ENCODE measurements at regions of chr3 and their contacts with region 1.

Region 1: GRCh38 chr3:78659386-78659987 is 1108.3 kb downstream of the ROBO1 start:
- DNase-seq: no peak
- ATAC-seq: peak; percentile 41
- H3K4me3 ChIP-seq: no peak overlapping the region
- H3K27ac ChIP-seq: no peak overlapping the region
- H3K4me1 ChIP-seq: no peaks in the 10 kb centered on the region
- H3K27me3 ChIP-seq: no peaks in the 10 kb centered on the region
- CTCF ChIP-seq: peak; percentile 29 to 61 (median 30); a peak in 5 of 6 replicates
- EP300 ChIP-seq: no peak
- POLR2A ChIP-seq: no peak
- RAD21 ChIP-seq: peak; percentile 80

Region 2: GRCh38 chr3:78872195-78872594 is 212.7 kb after region 1 on chr3:
- CTCF ChIA-PET with region 1: no interaction called
- POLR2A ChIA-PET with region 1: interaction called, 6 read pairs
- RAD21 ChIA-PET with region 1: interaction called, 3 read pairs
- SMC1A ChIA-PET with region 1: interaction called, 3 read pairs
- in situ Hi-C with region 1: no loop called
- intact Hi-C with region 1: loop called (anchors 5 kb)
- DNase-seq: no peak
- ATAC-seq: peak; percentile 20; the same call in 2 of the 3 replicates
- H3K4me3 ChIP-seq: no peak overlapping the region
- H3K27ac ChIP-seq: 0 out of 2 replicates have a peak overlapping the region, but pooled peaks have one; percentile 4
- H3K4me1 ChIP-seq: no peaks in the 10 kb centered on the region
- H3K27me3 ChIP-seq: no peaks in the 10 kb centered on the region
- CTCF ChIP-seq: no peak
- EP300 ChIP-seq: no peak; a peak in 1 of 4 replicates
- POLR2A ChIP-seq: no peak
- RAD21 ChIP-seq: no peak

Region 3: DNA sequence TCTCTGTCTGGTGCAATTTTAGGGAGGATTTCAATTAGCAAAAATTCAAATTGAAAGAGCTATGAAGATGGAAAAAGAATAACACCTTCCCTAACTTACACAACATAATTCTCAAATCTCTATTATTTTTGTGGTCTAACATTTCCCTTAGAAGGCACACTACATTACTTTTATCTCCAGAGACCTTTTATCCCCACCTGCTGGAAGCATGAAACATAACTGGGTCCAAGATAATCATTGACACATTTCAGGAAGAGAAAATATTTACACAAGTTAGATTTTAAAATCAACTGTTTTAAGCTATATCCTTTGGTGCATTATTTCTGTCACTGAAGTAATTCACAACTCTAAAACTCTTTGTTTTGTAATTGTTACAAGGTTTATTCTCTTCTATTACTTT is 328.8 kb after region 1 on chr3:
- CTCF ChIA-PET with region 1: interaction called, 18 read pairs
- POLR2A ChIA-PET with region 1: no interaction called
- RAD21 ChIA-PET with region 1: interaction called, 8 read pairs
- SMC1A ChIA-PET with region 1: interaction called, 9 read pairs
- in situ Hi-C with region 1: no loop called
- intact Hi-C with region 1: loop called (anchors 5 kb)
- DNase-seq: no peak
- ATAC-seq: no peak
- H3K4me3 ChIP-seq: no peak overlapping the region
- H3K27ac ChIP-seq: no peak overlapping the region
- H3K4me1 ChIP-seq: no peaks in the 10 kb centered on the region
- H3K27me3 ChIP-seq: no peaks in the 10 kb centered on the region
- CTCF ChIP-seq: peak in 1 of 3 experiments; percentile 32; a peak in 1 of 6 replicates
- EP300 ChIP-seq: no peak
- POLR2A ChIP-seq: no peak
- RAD21 ChIP-seq: peak; percentile 23

Region 4: DNA sequence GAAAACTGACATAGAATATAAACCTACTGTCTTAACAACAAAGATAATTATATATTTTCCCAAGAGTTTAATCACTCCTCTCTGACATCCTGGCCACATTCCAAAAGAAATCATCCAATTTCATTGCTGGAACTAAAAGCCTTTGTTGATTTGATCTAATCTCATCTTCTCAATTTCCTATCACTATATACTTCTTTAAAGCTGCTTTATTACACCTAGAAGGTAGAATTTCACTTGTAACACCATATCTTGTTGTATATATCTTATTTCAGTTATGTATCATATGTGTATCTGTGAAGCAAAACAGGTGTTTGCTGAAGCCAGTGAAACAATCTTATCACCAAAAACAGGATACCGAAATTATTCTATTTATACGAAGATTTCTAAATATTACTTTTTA is 368.1 kb after region 1 on chr3:
- CTCF ChIA-PET with region 1: interaction called, 104 read pairs
- POLR2A ChIA-PET with region 1: interaction called, 3 read pairs
- RAD21 ChIA-PET with region 1: interaction called, 56 read pairs
- SMC1A ChIA-PET with region 1: interaction called, 55 read pairs
- in situ Hi-C with region 1: loop called (anchors 5 kb)
- intact Hi-C with region 1: loop called (anchors 1 kb)
- DNase-seq: no peak
- ATAC-seq: no peak
- H3K4me3 ChIP-seq: no peak overlapping the region
- H3K27ac ChIP-seq: no peak overlapping the region
- H3K4me1 ChIP-seq: no peaks in the 10 kb centered on the region
- H3K27me3 ChIP-seq: no peaks in the 10 kb centered on the region
- CTCF ChIP-seq: no peak
- EP300 ChIP-seq: no peak
- POLR2A ChIP-seq: no peak
- RAD21 ChIP-seq: no peak

Region 5: GRCh38 chr3:79032686-79033318 is 373.3 kb after region 1 on chr3:
- CTCF ChIA-PET with region 1: interaction called, 104 read pairs
- POLR2A ChIA-PET with region 1: interaction called, 3 read pairs
- RAD21 ChIA-PET with region 1: interaction called, 56 read pairs
- SMC1A ChIA-PET with region 1: interaction called, 55 read pairs
- in situ Hi-C with region 1: loop called (anchors 5 kb)
- intact Hi-C with region 1: loop called (anchors 1 kb)
- DNase-seq: no peak
- ATAC-seq: peak; percentile 78
- H3K4me3 ChIP-seq: no peak overlapping the region
- H3K27ac ChIP-seq: no peak overlapping the region
- H3K4me1 ChIP-seq: no peaks in the 10 kb centered on the region
- H3K27me3 ChIP-seq: no peaks in the 10 kb centered on the region
- CTCF ChIP-seq: peak; percentile 35 to 59 (median 35); a peak in 5 of 6 replicates
- EP300 ChIP-seq: no peak
- POLR2A ChIP-seq: no peak
- RAD21 ChIP-seq: peak; percentile 77

Region 6: DNA sequence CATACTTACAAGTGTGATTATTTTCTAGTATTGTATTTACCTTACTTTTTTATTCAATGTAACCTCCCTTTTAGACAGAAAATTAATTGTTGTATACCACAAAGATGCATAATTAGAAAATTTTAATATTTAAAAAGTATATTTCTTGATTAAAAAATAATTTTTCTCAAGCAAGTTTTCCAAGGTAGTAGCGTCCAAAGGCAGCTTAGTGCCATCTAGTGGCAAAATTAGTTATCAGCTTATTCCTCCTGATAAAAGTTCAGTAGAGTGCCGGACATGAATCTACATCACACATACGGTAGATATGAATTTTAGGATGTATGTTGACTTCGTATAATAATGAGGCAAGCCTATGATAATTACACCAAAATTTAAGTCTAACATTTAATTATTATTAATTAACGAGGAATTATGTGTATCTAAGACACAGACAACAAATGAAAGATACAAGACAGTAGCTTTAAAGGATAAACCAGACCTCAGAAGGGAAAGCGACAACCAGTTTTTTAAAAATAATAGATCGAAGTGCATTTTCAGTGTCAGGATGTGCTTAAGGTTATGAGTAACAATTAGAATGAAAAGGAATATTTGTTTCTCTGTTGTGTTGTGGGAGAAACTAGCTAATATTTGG is 702.4 kb after region 1 on chr3:
- CTCF ChIA-PET with region 1: interaction called, 4 read pairs
- POLR2A ChIA-PET with region 1: no interaction called
- RAD21 ChIA-PET with region 1: interaction called, 3 read pairs
- SMC1A ChIA-PET with region 1: no interaction called
- in situ Hi-C with region 1: loop called (anchors 10 kb)
- intact Hi-C with region 1: loop called (anchors 5 kb)
- DNase-seq: no peak
- ATAC-seq: peak; percentile 77
- H3K4me3 ChIP-seq: no peak overlapping the region
- H3K27ac ChIP-seq: no peak overlapping the region
- H3K4me1 ChIP-seq: no peaks in the 10 kb centered on the region
- H3K27me3 ChIP-seq: no peaks in the 10 kb centered on the region
- CTCF ChIP-seq: peak; percentile 62 to 70 (median 64)
- EP300 ChIP-seq: no peak
- POLR2A ChIP-seq: no peak
- RAD21 ChIP-seq: peak; percentile 73

Region 7: GRCh38 chr3:79497447-79498111 is 838.1 kb after region 1 on chr3:
- CTCF ChIA-PET with region 1: no interaction called
- POLR2A ChIA-PET with region 1: no interaction called
- RAD21 ChIA-PET with region 1: no interaction called
- SMC1A ChIA-PET with region 1: no interaction called
- in situ Hi-C with region 1: loop called (anchors 25 kb)
- intact Hi-C with region 1: loop called (anchors 10 kb)
- DNase-seq: no peak
- ATAC-seq: no peak
- H3K4me3 ChIP-seq: no peak overlapping the region
- H3K27ac ChIP-seq: no peak overlapping the region
- H3K4me1 ChIP-seq: no peaks in the 10 kb centered on the region
- H3K27me3 ChIP-seq: no peaks in the 10 kb centered on the region
- CTCF ChIP-seq: peak; percentile 46 to 54 (median 46); a peak in 5 of 6 replicates
- EP300 ChIP-seq: no peak
- POLR2A ChIP-seq: no peak
- RAD21 ChIP-seq: peak; percentile 47

Measured in GM12878 (cell line).